Activated CD4-positive, alpha-beta memory T cell treated with anti-CD3 and anti-CD28 coated beads for 36 hours (primary cell): ENCODE measurements at regions of chr3 and their contacts with region 1.

Region 1: GRCh38 chr3:101779047-101779821 is at the start of gene NXPE3:
- DNase-seq: peak; percentile 96
- H3K4me3 Mint-ChIP-seq: peak within 1 kb of the TSS; percentile 95
- H3K27ac Mint-ChIP-seq: peak within 1 kb of the TSS; percentile 95
- H3K4me1 Mint-ChIP-seq: peaks cover 51% of the 10 kb centered on the region
- H3K27me3 Mint-ChIP-seq: no peaks in the 10 kb centered on the region
- total RNA-seq, gene NXPE3: 18.7 to 19.8 TPM

Region 2: DNA sequence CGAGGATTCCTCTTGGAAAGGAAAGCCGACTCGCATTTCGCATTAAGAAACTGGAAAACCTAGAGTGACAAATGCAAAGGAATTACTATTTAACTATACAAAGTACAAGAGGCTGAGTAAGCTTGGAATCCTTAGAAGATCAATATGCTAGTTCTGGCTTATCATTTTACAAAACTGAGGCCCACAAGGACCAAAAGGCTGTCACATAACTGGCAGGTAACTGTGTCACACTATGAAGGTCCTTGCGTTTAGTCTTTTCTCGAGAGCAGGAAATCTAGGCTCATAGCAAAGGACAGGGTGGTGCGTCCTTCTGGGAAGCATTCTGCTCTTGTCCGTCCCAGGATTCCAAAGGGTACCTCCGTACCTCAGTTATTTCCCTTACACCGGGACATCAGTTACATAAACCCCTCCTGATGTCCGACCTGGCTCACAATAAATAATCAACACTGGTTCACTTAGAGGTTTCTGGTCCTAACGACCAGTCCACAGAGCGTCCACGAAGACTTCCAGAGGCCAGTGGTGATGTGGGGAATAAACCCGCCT is 93.3 kb before region 1 on chr3:
- CTCF ChIA-PET with region 1: interaction called, 3 read pairs
- POLR2A ChIA-PET with region 1: no interaction called
- intact Hi-C with region 1: loop called (anchors 1 kb)
- DNase-seq: no peak
- H3K4me3 Mint-ChIP-seq: peak overlapping the region; percentile 99
- H3K27ac Mint-ChIP-seq: peak overlapping the region; percentile 99
- H3K4me1 Mint-ChIP-seq: peaks cover 40% of the 10 kb centered on the region
- H3K27me3 Mint-ChIP-seq: no peaks in the 10 kb centered on the region

Region 3: DNA sequence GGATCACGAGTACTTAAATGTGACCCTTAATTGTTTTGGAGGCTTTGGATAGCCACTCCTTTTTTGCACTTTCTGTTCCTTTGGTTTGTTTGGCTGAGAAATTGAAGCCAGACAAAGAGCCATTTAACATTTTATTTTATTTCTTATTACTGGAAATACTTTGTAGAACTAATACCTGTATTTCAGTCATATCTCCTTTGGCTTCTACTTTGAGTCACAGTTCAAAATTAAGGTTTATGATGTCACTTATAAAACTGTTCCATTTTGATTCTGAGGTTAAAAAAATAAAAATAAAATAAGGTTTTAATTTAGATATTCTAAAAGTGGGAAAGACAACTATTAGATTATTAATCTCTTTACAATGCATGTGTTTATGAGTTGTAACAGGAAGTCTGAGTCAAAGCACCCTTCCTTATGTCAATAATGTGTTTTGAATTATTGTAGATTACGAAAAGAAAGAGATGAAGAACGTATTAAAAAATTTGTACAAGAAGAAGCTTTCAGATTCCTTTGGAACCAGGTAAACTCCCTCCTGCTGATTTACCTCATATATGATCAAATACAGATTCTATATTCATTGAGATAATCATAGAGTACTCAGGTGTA is 17.1 kb before region 1 on chr3:
- CTCF ChIA-PET with region 1: no interaction called
- POLR2A ChIA-PET with region 1: no interaction called
- intact Hi-C with region 1: no loop called
- DNase-seq: no peak
- H3K4me3 Mint-ChIP-seq: no peak overlapping the region
- H3K27ac Mint-ChIP-seq: no peak overlapping the region
- H3K4me1 Mint-ChIP-seq: peaks cover 12% of the 10 kb centered on the region
- H3K27me3 Mint-ChIP-seq: no peaks in the 10 kb centered on the region